ENCODE measurements at regions of chr12 and their contacts with region 1.

Region 1: DNA sequence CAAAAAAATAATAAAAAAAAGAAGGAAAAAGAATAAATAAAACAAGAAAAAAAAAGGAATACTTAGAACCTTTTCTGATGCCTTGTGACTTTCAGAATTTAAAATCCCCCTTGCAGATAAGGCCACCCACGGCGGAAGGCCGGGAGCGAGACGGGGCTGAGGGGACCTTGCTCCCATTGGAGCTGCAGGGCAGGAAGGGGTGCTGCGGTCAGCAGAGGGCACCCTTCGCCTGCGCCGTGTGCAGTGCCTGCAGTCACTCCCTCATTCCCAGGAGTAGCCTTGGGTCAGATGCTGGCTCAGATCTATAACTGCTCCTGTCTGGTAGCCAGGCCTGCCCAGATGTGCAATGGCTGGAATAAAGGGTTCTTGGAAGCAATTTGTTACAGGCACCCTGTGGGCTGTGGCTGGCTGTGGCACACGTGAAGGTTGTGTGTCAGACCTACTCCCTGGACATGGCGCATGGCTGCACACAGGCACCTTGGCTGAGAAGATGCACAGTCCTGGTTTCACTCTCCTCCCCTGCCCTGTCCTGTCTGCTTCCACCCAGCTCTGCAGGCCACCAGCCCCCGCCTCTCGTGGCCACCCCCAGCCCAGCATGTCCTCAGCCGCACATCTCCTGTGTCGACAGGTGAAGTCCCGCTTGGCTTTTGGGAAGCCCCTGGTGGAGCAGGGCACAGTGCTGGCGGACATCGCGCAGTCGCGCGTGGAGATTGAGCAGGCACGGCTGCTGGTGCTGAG is 13.4 kb upstream of the ALDH2 start:
- DNase-seq: peak; percentile 86
- H3K4me3 ChIP-seq: no peak overlapping the region
- H3K27ac ChIP-seq: no peak overlapping the region
- H3K4me1 ChIP-seq: peaks cover 0 to 28% (median 19%) of the 10 kb centered on the region in 6 donors
- H3K27me3 ChIP-seq: no peaks in the 10 kb centered on the region
- CTCF ChIP-seq: peak; percentile 41 to 83 (median 77)
- POLR2A ChIP-seq: no peak

Region 2: DNA sequence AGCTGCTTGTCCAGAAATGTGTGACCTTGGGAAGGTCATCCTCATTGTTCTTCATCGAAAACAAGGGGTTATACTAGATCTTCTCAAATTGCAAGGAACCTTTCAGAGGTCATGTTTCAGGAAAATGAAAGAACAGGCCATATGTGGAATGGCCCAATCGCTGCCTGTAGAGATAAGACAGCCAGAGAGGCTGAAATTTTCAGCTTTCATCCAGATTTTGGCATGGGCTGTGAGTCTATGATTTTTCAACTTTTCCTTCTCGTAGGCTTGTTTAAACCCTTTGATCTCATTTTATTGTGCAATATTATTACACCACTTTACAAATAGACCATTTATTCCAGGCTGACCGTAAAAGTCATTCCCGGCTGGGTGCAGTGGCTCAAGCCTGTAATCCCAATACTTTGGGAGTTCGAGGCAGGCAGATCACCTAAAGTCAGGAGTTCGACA is 137.1 kb before region 1 on chr12:
- intact Hi-C with region 1: no loop called
- DNase-seq: peak; percentile 10
- H3K4me3 ChIP-seq: no peak overlapping the region
- H3K27ac ChIP-seq: no peak overlapping the region
- H3K4me1 ChIP-seq: no peaks in the 10 kb centered on the region
- H3K27me3 ChIP-seq: no peaks in the 10 kb centered on the region
- CTCF ChIP-seq: no peak
- POLR2A ChIP-seq: no peak

Region 3: DNA sequence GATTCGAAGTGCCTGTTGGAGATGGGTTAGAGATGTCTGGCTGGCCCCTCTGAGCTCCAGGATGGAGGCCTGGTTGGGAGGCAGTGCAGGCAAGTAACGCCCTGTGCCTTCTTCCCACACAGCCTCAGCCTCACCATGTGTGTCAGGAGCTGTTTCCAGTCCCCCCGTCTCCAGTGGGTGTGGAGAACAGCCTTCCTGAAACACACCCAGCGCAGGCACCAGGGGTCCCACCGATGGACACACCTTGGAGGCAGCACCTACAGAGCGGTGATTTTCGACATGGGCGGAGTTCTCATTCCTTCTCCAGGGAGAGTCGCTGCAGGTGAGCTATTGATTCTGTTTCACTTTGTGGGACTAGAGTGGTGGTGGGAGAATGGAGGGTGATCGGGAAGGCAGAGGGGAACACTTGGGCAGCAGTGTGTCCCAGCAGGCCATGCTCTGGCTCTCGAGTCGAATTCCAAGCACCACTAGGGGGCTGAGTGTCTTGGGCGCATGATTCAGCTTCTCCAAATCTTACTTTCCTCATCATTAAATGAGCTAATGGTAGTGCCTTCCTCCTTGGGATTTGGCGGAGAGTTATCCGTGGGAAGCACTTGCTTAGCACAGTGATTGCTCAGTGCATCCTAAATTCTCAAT is 60.6 kb before region 1 on chr12:
- intact Hi-C with region 1: no loop called
- DNase-seq: no peak
- H3K4me3 ChIP-seq: no peak overlapping the region
- H3K27ac ChIP-seq: no peak overlapping the region
- H3K4me1 ChIP-seq: peaks cover 0 to 3% (median 0%) of the 10 kb centered on the region in 6 donors
- H3K27me3 ChIP-seq: no peaks in the 10 kb centered on the region
- CTCF ChIP-seq: no peak
- POLR2A ChIP-seq: no peak

Region 4: DNA sequence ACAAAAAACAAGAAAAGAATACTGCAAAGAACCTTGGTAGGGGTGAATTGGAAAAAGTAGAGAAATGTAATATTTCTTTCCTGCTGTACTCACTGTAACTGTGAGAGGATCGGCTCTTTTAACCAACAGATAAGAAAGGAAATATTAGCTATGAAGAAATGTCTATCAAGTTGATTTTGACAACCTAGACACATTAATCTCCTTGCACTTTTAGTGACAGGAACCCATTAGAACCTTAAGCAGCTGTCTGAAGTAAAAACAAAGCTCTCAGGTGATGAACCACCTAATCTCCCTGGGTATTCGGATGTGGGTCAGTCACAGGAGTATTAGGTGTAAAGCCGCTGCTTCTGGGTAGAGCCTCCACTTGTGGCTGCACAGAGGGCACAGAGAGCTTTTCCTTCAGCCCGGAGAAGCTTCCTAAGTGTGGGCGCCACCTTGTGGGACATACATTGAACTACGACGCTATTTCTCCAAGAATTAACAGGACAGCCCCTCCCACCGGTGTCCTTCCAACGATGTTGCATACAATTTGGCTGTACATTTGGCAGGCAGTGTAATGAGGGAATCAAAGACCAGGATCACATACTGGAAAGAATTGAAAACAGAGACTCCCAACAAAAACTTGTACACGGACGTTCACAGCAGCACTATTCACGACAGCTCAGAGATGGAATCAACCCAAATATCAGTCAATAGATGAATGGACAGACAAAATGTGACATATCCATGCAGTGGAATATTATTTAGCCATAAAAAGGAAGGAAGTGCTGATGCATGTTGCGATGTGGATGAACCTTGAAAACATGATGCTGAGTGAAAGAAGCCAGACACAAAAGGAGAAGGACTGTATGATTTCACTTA is 59.8 kb after region 1 on chr12:
- intact Hi-C with region 1: loop called (anchors 5 kb)
- DNase-seq: peak; percentile 84
- H3K4me3 ChIP-seq: no peak overlapping the region
- H3K27ac ChIP-seq: peak overlapping the region in 1 of 8 donors; percentile 14
- H3K4me1 ChIP-seq: peaks cover 0 to 12% (median 9%) of the 10 kb centered on the region in 6 donors
- H3K27me3 ChIP-seq: no peaks in the 10 kb centered on the region
- CTCF ChIP-seq: peak; percentile 56 to 89 (median 79)
- POLR2A ChIP-seq: no peak

Region 5: DNA sequence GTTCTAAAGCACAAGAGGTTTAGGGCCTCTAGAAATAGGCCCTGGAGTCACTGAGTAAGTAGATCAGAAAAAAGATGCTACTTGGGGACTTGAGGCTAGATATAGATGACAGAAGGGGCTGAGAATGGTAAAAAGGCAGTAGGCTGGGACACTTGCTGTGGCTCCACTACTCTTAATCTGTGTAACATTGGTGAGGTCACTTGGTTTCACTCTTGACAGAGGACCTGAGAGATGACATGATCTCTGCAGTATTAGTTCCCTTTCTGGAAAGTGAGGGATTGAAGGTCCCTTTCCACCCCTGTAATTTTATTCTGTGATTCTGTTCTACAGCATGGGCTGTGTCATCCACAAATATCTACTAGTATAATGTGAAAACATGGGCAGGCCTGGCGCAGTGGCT is 128.4 kb after region 1 on chr12:
- intact Hi-C with region 1: no loop called
- DNase-seq: no peak
- H3K4me3 ChIP-seq: no peak overlapping the region
- H3K27ac ChIP-seq: no peak overlapping the region
- H3K4me1 ChIP-seq: no peaks in the 10 kb centered on the region
- H3K27me3 ChIP-seq: no peaks in the 10 kb centered on the region
- CTCF ChIP-seq: no peak
- POLR2A ChIP-seq: no peak

Region 6: DNA sequence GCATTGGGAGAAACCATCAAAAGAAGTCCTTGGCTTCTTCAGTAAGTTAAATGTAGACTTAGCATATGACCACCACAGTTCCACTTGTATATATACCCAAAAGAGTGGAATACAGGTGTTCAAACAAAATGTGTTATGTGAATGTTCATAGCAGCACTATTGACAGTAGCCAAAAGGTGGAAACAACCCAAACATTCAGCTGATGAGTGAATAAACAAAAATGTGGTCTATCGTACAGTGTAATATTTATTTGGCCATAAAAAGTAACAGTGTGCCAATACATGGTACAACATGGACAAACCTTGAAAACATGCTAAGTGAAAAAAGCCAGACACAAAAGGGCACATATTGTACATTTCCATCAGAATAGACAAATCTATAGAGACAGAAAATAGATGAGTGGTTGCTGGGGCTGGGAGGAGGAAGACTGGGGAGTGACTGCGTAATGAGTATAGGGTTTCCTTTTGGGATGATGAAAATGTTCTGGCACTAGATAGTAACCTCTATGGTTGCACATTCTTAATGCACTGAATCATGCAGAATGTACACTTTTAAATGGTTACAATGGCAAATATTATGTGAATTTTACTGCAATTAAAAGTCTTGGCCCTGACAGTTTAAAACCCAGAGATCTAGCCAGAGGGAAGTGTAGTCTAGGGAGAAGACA is 265.4 kb after region 1 on chr12:
- intact Hi-C with region 1: no loop called
- DNase-seq: no peak
- H3K4me3 ChIP-seq: no peak overlapping the region
- H3K27ac ChIP-seq: peak overlapping the region in 1 of 8 donors; percentile 12
- H3K4me1 ChIP-seq: peaks cover 16 to 75% (median 53%) of the 10 kb centered on the region in 6 donors
- H3K27me3 ChIP-seq: no peaks in the 10 kb centered on the region
- CTCF ChIP-seq: no peak
- POLR2A ChIP-seq: no peak

Measured in spleen (tissue), 13 donors.